H1 (cell line): ENCODE measurements at regions of chr2 and their contacts with region 1.

Region 1: DNA sequence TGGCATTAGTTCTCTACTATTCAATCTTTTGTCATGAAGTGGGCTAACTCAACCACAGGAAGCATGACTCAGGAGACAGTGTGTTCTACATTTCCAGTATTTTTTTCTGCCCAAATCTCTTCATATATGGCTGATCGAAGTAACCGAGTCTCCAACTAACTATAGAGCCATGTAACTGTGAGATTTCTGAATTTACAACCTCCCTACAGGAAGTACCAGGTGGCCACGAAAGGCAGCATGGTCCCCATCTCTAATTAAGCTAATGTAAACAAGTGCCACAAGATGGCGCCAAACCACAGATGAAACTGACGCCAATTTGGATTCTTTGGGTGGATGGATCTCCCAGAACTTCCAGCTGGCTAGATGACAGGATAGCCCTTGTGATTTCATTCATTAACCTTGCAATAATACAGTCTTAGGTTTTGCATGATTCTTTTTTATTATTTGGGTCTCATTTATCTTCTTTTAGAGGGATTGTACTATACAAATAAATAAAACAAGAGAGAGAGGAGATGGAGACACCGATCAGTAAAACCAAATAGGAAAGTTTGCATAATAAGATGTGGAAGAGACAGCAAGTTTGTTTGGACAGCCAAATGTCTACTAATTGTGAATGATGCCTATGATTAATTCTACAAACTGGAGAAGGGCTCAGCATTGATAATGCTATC is 18.3 kb upstream of the ARHGAP15 start:
- DNase-seq: peak; percentile 34 to 66
- H3K4me3 ChIP-seq: no peak overlapping the region
- H3K27ac ChIP-seq: no peak overlapping the region
- H3K4me1 ChIP-seq: no peaks in the 10 kb centered on the region
- H3K27me3 ChIP-seq: no peaks in the 10 kb centered on the region
- CTCF ChIP-seq: peak; percentile 26 to 77 (median 76)
- EP300 ChIP-seq: no peak
- POLR2A ChIP-seq: no peak
- RAD21 ChIP-seq: peak; percentile 85 to 88

Region 2: GRCh38 chr2:143121957-143122356 is 11.1 kb after region 1 on chr2:
- CTCF ChIA-PET with region 1: interaction called, 19 read pairs
- POLR2A ChIA-PET with region 1: no interaction called
- DNase-seq: no peak
- H3K4me3 ChIP-seq: no peak overlapping the region
- H3K27ac ChIP-seq: no peak overlapping the region
- H3K4me1 ChIP-seq: no peaks in the 10 kb centered on the region
- H3K27me3 ChIP-seq: peaks cover 0 to 1% (median 0%) of the 10 kb centered on the region in 4 experiments; a peak in 1 of 7 replicates
- CTCF ChIP-seq: no peak
- EP300 ChIP-seq: no peak
- POLR2A ChIP-seq: no peak
- RAD21 ChIP-seq: no peak

Region 3: GRCh38 chr2:143128681-143129580 is 18.0 kb after region 1 on chr2 and contains the start of gene ARHGAP15:
- CTCF ChIA-PET with region 1: interaction called, 19 read pairs
- POLR2A ChIA-PET with region 1: no interaction called
- DNase-seq: no peak
- H3K4me3 ChIP-seq: no peak within 1 kb of the TSS
- H3K27ac ChIP-seq: no peak within 1 kb of the TSS
- H3K4me1 ChIP-seq: no peaks in the 10 kb centered on the region
- H3K27me3 ChIP-seq: peaks cover 0 to 1% (median 0%) of the 10 kb centered on the region in 4 experiments; a peak in 1 of 7 replicates
- CTCF ChIP-seq: no peak
- EP300 ChIP-seq: no peak
- POLR2A ChIP-seq: no peak
- RAD21 ChIP-seq: no peak
- total RNA-seq, gene ARHGAP15: not detected in 2 replicates

Region 4: DNA sequence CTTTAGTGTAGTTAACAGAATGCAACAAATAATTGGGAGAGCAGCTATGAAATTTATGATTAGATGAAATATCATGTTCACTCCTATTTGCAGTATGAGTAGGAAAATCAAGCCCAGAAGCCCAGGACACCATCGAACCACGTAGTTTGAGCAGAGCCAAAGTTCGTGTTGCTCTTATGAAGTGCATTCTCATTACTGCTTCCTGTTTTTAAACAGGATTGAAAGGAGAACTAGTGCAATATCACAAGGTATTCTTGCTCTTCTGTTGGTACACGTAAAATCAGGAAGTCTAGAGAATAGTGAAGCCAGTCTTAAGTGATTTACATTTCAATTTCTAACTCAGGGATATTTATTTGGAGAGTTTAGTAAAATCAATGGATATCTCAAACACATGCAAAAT is 39.4 kb after region 1 on chr2:
- CTCF ChIA-PET with region 1: no interaction called
- POLR2A ChIA-PET with region 1: no interaction called
- DNase-seq: no peak
- H3K4me3 ChIP-seq: no peak overlapping the region
- H3K27ac ChIP-seq: no peak overlapping the region
- H3K4me1 ChIP-seq: no peaks in the 10 kb centered on the region
- H3K27me3 ChIP-seq: no peaks in the 10 kb centered on the region
- CTCF ChIP-seq: no peak
- EP300 ChIP-seq: no peak
- POLR2A ChIP-seq: no peak
- RAD21 ChIP-seq: no peak

Region 5: GRCh38 chr2:143217512-143218115 is 106.7 kb after region 1 on chr2:
- CTCF ChIA-PET with region 1: interaction called, 12 read pairs
- POLR2A ChIA-PET with region 1: no interaction called
- DNase-seq: no peak
- H3K4me3 ChIP-seq: no peak overlapping the region
- H3K27ac ChIP-seq: no peak overlapping the region
- H3K4me1 ChIP-seq: no peaks in the 10 kb centered on the region
- H3K27me3 ChIP-seq: no peaks in the 10 kb centered on the region
- CTCF ChIP-seq: no peak
- EP300 ChIP-seq: no peak
- POLR2A ChIP-seq: no peak
- RAD21 ChIP-seq: no peak

Region 6: GRCh38 chr2:143284087-143284675 is 173.3 kb after region 1 on chr2:
- CTCF ChIA-PET with region 1: interaction called, 11 read pairs
- POLR2A ChIA-PET with region 1: no interaction called
- DNase-seq: no peak
- H3K4me3 ChIP-seq: no peak overlapping the region
- H3K27ac ChIP-seq: no peak overlapping the region
- H3K4me1 ChIP-seq: no peaks in the 10 kb centered on the region
- H3K27me3 ChIP-seq: no peaks in the 10 kb centered on the region
- CTCF ChIP-seq: peak; percentile 60 to 77 (median 63)
- EP300 ChIP-seq: no peak
- POLR2A ChIP-seq: no peak
- RAD21 ChIP-seq: peak; percentile 44 to 62

Region 7: DNA sequence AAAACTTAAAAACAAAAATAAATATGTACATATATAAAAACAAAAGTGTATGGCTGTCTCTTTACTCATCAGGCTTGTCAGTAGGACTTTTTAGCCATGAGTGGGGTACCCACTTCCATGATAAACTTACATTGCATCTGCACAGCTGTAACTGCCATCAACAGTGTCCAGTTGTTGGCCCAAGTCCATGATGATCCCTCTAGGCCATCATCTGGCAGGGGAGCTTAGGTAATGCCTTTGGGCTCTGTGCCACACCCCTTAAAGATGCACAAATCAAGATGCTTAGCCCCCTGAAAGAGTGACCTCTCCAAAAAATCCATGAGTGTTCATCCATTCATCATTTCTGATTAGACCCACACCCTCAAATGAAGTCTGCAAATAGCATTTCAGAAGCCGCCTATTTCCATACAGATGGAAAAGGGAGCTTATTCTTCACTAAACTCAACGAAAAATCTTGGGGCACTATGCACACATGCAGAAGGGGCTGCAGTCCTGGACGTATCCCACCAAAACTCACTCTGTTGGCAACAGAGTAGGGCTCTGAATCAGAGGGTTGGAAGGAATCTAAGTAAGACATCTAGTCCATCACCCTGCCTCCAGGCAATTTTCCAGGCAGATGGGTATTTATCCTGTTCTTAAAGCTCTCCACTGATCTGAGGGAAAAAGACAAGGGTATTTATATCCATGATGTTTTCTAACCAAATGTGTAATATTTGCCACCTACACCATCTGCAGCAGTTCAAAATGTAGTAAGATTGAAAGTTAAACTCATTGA is 718.1 kb after region 1 on chr2:
- CTCF ChIA-PET with region 1: no interaction called
- POLR2A ChIA-PET with region 1: no interaction called
- DNase-seq: no peak
- H3K4me3 ChIP-seq: no peak overlapping the region
- H3K27ac ChIP-seq: no peak overlapping the region
- H3K4me1 ChIP-seq: peaks cover 0 to 12% (median 5%) of the 10 kb centered on the region in 4 experiments; a peak in 3 of 7 replicates
- H3K27me3 ChIP-seq: no peaks in the 10 kb centered on the region
- CTCF ChIP-seq: no peak
- EP300 ChIP-seq: no peak
- POLR2A ChIP-seq: no peak
- RAD21 ChIP-seq: no peak